Activated T-helper 1 cell treated with anti-CD3 and anti-CD28 coated beads, Interleukin-12 subunit alpha, Interleukin-12 subunit beta, Interleukin-2, Interleukin-4 antibody, amounts not matched to agents 30 ng/mL and 10 ng/mL and 1 ng/mL, durations not matched to agents 14 hours and 24 hours and 36 hours (primary cell): ENCODE measurements at regions of chr6 and their contacts with region 1.

Region 1: GRCh38 chr6:119349323-119350042 is at the start of gene MAN1A1:
- DNase-seq: peak; percentile 92
- H3K4me3 Mint-ChIP-seq: peak within 1 kb of the TSS; percentile 79
- H3K27ac Mint-ChIP-seq: peak within 1 kb of the TSS; percentile 94
- H3K4me1 Mint-ChIP-seq: peaks cover 69% of the 10 kb centered on the region
- H3K27me3 Mint-ChIP-seq: no peaks in the 10 kb centered on the region
- total RNA-seq, gene MAN1A1: 50.1 and 52.4 TPM in 2 replicates

Region 2: DNA sequence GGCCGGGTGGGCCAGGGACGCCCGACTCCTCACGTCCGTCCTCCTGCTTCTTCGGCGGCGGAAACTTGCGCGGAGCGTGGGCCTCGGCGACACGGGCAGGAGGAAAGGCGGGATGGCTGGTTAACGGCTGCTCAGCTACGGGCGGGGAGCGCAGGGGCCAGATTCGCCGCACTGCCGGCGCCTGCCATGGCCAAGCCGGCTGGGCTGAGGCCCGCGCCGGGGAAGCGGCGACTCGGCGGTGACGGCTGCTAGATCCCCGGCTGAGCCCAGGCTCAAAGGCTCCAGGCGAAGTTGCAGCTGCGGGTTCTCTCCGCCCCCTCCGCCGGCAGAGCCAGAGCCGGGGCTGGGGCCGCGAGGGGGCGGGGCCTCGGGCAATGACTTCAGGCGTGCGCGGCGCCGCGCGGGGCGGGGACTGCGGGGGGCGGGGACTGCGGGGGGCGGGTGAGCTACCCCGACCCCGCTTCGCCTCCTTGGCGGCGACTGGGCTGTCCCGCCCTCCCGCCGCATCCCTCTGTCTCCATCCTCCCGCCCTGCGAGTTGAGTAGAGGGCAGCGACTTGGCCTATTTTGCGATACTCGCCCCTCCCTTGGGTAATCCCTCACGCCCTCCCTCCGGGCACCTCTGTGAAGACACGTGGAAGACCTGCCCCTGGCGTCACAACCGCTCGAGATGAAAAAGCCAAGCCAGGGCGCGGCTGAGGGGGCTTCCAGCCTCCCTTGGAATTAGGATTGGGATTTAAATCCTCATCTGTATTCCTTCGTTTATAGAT is 698.0 kb before region 1 on chr6 and contains the start of gene CEP85L:
- intact Hi-C with region 1: loop called (anchors 10 kb)
- DNase-seq: peak; percentile 86
- H3K4me3 Mint-ChIP-seq: peak within 1 kb of the TSS; percentile 85
- H3K27ac Mint-ChIP-seq: peak within 1 kb of the TSS; percentile 92
- H3K4me1 Mint-ChIP-seq: peaks cover 52% of the 10 kb centered on the region
- H3K27me3 Mint-ChIP-seq: no peaks in the 10 kb centered on the region
- total RNA-seq, gene CEP85L: 50.9 and 51.4 TPM in 2 replicates

Region 3: GRCh38 chr6:118724211-118724610 is 625.3 kb before region 1 on chr6:
- intact Hi-C with region 1: no loop called
- DNase-seq: no peak
- H3K4me3 Mint-ChIP-seq: peak overlapping the region; percentile 46
- H3K27ac Mint-ChIP-seq: peak overlapping the region; percentile 40
- H3K4me1 Mint-ChIP-seq: peaks cover 56% of the 10 kb centered on the region
- H3K27me3 Mint-ChIP-seq: peaks cover 2% of the 10 kb centered on the region

Region 4: DNA sequence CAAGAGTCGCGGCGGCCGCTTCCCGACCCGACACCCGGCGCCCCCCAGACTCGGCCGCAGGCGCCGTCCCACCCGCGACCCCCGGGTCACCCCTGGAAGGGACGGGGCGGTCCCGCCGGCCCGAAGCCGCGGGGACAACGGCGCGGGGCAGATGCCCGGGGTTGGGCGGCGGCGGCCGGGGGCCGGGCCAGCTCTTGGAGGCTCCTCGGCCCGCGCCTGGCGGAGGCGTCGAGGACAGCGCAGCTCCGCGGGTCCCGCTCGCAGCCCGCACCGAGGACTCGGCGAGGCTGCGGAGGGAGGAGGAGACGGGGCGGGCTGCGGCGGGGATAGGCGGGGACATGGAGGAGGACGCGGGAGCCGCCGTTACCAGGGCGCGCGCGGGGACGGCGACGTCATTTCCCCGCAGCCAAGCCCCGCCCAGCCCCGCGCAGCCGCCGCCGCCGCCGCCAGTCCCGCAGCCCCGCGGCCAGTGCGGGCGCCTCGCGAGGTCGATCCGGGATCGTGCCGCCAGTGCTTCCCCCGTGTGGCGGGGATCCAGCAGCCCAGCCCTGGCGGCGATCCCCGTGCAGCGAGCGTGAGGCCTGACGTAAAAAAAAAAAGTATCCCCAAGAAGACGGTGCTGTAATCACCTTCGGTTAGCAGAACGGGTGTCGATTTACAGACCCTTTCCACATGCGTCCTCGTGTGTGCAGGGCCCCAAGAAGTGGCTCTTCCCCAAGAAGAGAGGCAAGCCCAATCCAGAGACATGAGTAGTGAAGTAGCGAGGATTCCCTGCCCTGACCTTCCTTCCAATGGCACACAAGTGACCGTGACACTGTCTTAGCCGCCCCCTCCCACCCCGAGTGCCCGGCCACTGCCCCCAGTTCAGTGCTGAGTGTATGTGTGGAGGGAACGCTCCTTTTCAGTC is 270.9 kb before region 1 on chr6 and contains the start of gene FAM184A:
- intact Hi-C with region 1: loop called (anchors 1 kb)
- DNase-seq: peak; percentile 73
- H3K4me3 Mint-ChIP-seq: peak within 1 kb of the TSS; percentile 92
- H3K27ac Mint-ChIP-seq: peak within 1 kb of the TSS; percentile 91
- H3K4me1 Mint-ChIP-seq: peaks cover 43% of the 10 kb centered on the region
- H3K27me3 Mint-ChIP-seq: peaks cover 8% of the 10 kb centered on the region
- total RNA-seq, gene FAM184A: 9.0 and 9.4 TPM in 2 replicates

Region 5: DNA sequence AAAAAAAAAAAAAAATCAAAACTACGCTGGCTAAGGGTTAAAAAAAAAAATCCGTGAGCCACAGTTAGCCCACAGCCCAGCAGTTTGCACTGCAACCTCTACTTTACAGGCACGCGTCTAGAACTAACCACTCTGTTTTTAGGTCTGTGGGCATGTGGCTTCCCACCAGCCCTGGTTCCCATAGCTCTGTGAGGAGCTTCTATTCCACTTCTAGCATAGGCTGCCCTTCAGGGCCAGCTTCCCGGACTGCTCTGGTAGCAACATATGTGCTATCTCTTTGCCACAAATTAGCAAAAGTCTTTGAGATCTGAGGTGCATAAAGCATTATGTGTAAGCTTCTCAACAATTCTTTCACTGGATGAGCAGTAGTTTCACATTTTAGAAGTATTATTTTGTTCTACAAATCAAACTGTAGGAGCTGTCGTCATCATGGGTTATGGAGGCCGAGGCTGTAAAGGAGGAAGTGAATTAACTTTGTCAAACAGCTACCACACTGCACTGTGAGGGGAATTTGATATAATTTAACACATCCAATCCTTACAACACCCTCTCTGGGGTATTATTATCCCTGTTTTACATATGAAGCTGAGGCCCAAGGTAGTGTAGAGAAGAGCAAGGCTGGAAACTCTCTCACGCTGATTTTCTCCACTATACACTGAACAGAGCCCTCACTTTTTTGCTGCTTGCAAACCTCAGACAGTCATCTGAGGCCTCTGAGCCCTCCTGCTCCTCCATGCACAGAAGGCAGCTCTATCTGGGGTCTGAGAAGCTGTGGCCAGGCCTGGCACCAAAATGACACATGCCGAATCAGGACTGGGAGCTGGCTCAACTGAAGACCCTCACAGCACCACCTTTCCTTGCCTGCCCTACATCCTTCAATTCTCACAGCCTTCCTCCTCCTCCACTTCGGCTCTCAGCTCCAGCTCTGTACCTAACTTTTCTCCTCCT is 35.3 kb before region 1 on chr6:
- intact Hi-C with region 1: loop called (anchors 1 kb)
- DNase-seq: peak; percentile 45
- H3K4me3 Mint-ChIP-seq: peak overlapping the region; percentile 73
- H3K27ac Mint-ChIP-seq: peak overlapping the region; percentile 99
- H3K4me1 Mint-ChIP-seq: peaks cover 76% of the 10 kb centered on the region
- H3K27me3 Mint-ChIP-seq: no peaks in the 10 kb centered on the region

Region 6: GRCh38 chr6:119360262-119360915 is 10.9 kb after region 1 on chr6:
- intact Hi-C with region 1: no loop called
- DNase-seq: no peak
- H3K4me3 Mint-ChIP-seq: no peak overlapping the region
- H3K27ac Mint-ChIP-seq: no peak overlapping the region
- H3K4me1 Mint-ChIP-seq: peaks cover 21% of the 10 kb centered on the region
- H3K27me3 Mint-ChIP-seq: no peaks in the 10 kb centered on the region

Region 7: DNA sequence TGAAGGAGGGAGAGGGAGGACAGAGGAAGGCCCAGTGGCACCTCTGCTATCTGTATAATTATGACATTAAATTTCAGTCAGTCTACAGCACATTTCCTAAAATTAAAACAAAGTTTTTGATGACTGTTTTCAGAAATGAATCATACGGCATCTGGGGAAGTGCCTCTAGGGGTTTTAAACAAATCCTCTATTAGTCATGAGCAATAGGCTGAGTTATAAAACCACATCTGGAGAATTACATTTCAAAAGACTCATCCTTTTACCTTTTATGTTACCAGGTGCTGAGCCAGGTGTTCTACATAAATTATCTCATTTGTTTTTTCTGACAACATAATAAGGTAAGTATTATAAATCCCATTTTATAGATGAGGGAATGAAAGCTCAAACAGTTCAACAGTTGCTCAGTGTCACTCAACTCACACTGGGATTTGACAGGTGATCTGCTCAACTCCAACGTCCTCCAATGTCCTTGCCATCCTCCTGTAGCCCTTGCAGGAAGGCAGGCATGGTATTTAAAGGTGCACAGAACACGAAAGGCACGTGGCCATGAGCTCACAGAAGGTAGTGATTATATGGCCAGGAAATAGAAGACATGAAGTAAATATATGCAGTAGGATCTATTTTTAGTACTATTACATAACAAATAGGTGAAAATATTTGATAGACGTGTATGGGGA is 184.3 kb after region 1 on chr6:
- intact Hi-C with region 1: loop called (anchors 1 kb)
- DNase-seq: no peak
- H3K4me3 Mint-ChIP-seq: no peak overlapping the region
- H3K27ac Mint-ChIP-seq: no peak overlapping the region
- H3K4me1 Mint-ChIP-seq: peaks cover 12% of the 10 kb centered on the region
- H3K27me3 Mint-ChIP-seq: peaks cover 15% of the 10 kb centered on the region

Region 8: DNA sequence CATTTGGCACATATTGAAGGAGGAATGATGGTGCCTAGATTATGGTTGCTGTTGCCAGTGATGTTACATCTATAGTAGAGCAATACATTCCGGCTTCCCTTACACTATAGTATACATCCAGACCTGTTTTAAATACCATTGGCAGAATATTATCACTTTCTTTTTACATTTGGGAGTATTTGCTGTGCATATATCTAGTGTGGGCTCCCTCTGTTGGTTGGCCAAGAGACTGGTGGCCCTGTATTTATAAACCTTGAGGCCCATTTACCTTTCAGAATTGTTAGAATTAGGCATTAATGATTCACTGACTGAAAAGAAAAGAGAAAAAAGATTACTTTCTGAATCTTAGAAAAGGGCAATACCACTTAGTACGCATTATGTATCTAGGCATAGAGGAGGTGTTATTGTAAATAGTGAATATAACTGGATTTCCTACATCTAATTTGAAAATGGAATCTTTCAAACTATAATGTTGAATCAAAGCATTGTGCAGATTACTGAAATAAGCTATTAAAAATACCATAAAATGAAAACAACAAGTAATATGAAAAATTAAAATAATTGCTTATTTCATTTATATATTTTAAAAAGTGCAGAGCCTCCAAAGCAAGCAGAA is 628.9 kb after region 1 on chr6:
- intact Hi-C with region 1: loop called (anchors 5 kb)
- DNase-seq: no peak
- H3K4me3 Mint-ChIP-seq: no peak overlapping the region
- H3K27ac Mint-ChIP-seq: no peak overlapping the region
- H3K4me1 Mint-ChIP-seq: no peaks in the 10 kb centered on the region
- H3K27me3 Mint-ChIP-seq: peaks cover 2% of the 10 kb centered on the region